GM10248 (cell line): ENCODE measurements at regions of chr7 and their contacts with region 1.

Region 1: DNA sequence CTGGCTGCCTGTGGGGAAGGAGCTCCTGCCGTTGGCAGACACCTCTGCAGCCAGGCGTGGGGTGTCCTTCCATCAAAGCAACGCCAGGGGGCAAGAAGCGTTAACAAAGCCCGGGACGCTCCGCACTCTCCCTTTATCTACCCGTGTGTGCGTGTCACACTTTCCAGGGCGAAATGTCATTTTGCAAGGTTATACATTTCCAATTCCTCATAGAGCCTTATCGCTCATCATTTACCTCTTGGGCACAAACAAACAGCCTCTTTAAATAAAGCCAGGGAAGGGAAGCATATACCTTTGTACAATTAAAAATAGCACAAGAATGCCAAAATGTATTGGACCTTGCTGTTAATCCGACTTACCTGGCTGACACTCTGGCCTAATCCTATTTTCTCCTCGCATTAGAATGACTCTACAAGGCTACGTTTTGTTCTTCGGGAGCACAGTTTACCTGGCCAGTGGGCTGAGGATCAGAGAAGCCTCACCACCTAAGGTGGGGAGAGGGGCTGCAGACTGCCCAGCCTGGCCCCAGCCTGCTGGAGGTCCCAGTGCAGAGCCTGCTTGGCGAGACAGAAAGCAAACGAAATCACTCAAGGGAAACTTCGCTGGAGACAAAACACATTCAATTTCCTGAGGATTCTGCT is 77.6 kb upstream of the EN2 start:
- DNase-seq: peak; percentile 82
- CTCF ChIP-seq: peak; percentile 57

Region 2: DNA sequence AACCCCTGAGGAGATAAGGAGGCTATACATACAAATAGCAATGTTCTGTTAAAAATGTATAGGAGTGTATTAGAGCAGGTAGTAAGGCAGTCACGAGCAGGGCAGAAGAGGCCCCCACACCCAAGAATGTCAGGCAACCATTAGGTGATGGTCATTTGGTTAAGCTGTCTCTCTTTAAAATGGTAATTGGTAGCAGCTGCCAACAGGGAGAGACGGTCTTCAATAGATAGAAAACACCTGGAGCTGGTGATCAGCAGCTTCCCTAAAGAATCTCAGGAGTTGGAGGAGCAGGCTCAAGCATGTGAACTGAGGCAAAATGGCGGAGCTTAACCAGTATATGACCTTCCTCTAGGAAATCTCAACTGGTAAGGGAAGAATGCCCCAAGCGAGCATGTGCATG is 336.6 kb before region 1 on chr7:
- CTCF ChIA-PET with region 1: no interaction called
- POLR2A ChIA-PET with region 1: no interaction called
- DNase-seq: no peak
- CTCF ChIP-seq: no peak

Region 3: DNA sequence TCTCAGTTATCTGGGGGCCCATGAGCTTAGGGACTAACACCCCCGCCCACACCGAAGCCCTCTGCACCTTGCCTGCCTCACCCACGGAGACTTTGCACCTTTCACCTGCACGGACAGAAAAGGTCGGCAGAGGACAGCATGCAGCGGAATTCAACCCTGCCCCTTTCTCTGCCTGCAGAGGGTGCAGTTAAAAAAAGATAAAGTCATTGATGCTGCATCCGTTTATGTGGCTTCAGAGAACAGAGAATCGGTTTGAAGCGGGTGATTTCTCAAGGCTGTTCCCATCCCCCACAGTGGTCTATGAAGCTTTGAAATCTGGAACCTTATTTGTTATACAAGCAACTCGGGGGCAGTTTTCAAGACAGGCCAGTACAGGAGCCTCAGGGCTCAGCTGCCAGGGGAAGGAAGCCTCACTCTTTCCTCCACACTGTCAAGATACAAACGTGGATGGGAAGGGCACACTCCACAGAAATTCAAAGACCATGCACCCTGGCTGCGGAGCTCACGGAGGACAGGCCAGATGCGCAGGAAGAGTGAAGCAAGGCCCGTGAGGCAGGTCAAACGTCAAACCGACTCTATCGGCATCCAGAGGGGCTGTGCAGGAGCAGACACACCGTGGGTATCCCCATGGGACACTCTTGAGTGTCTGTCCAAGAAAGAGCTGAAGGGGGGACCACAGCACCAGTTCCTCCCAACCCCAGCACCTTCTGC is 16.3 kb before region 1 on chr7:
- CTCF ChIA-PET with region 1: interaction called, 15 read pairs
- POLR2A ChIA-PET with region 1: no interaction called
- DNase-seq: no peak
- CTCF ChIP-seq: peak; percentile 14

Region 4: GRCh38 chr7:155835446-155836215 is 455.3 kb after region 1 on chr7:
- CTCF ChIA-PET with region 1: no interaction called
- POLR2A ChIA-PET with region 1: no interaction called
- DNase-seq: no peak
- CTCF ChIP-seq: no peak